ENCODE measurements at regions of chr9 and their contacts with region 1.

Region 1: GRCh38 chr9:15453956-15454355 is 31.3 kb downstream of the SNAPC3 start:
- DNase-seq: no peak
- H3K4me3 ChIP-seq: no peak overlapping the region
- H3K27ac ChIP-seq: no peak overlapping the region
- H3K4me1 ChIP-seq: no peaks in the 10 kb centered on the region
- CTCF ChIP-seq: no peak

Region 2: DNA sequence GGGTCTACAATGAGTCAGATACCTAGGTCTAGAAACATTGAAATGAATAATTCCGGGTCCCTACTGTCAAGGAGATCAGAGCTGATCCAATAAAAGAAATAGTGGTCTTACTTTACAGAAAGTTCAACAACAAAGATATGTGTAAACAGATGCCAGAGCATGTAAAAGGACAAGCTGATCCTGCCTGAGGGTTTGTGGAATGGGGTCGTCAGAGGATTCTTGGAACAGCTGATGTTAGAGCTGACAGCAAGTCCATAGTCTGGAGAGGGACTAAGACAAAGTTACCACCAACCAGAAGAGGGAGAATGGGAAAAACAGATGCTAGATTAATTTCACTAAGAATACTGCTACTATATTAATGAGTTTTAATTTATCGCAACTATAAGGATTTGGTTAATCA is 615.3 kb before region 1 on chr9:
- CTCF ChIA-PET with region 1: no interaction called
- POLR2A ChIA-PET with region 1: no interaction called
- intact Hi-C with region 1: no loop called
- DNase-seq: no peak
- H3K4me3 ChIP-seq: no peak overlapping the region
- H3K27ac ChIP-seq: no peak overlapping the region
- H3K4me1 ChIP-seq: no peaks in the 10 kb centered on the region
- CTCF ChIP-seq: no peak

Region 3: GRCh38 chr9:15492485-15493150 is 38.7 kb after region 1 on chr9:
- CTCF ChIA-PET with region 1: no interaction called
- POLR2A ChIA-PET with region 1: interaction called, 5 read pairs
- intact Hi-C with region 1: loop called (anchors 5 kb)
- DNase-seq: no peak
- H3K4me3 ChIP-seq: no peak overlapping the region
- H3K27ac ChIP-seq: no peak overlapping the region
- H3K4me1 ChIP-seq: no peaks in the 10 kb centered on the region
- CTCF ChIP-seq: no peak